ENCODE measurements at regions of chr21 and their contacts with region 1.

Region 1: GRCh38 chr21:34888569-34889319 is 160.4 kb downstream of the RUNX1 start:
- DNase-seq: peak; percentile 95
- H3K4me3 Mint-ChIP-seq: peak overlapping the region; percentile 96
- H3K27ac Mint-ChIP-seq: peak overlapping the region; percentile 99
- H3K4me1 Mint-ChIP-seq: peaks cover 34% of the 10 kb centered on the region
- H3K27me3 Mint-ChIP-seq: peaks cover 2% of the 10 kb centered on the region

Region 2: GRCh38 chr21:34693192-34693810 is 195.4 kb before region 1 on chr21:
- intact Hi-C with region 1: loop called (anchors 5 kb)
- DNase-seq: peak; percentile 83
- H3K4me3 Mint-ChIP-seq: no peak overlapping the region
- H3K27ac Mint-ChIP-seq: no peak overlapping the region
- H3K4me1 Mint-ChIP-seq: peaks cover 2% of the 10 kb centered on the region
- H3K27me3 Mint-ChIP-seq: peaks cover 38% of the 10 kb centered on the region

Region 3: GRCh38 chr21:34865928-34866284 is 22.8 kb before region 1 on chr21:
- intact Hi-C with region 1: loop called (anchors 2 kb)
- DNase-seq: peak; percentile 77
- H3K4me3 Mint-ChIP-seq: peak overlapping the region; percentile 68
- H3K27ac Mint-ChIP-seq: peak overlapping the region; percentile 82
- H3K4me1 Mint-ChIP-seq: peaks cover 38% of the 10 kb centered on the region
- H3K27me3 Mint-ChIP-seq: no peaks in the 10 kb centered on the region

Region 4: GRCh38 chr21:34967509-34968289 is 79.0 kb after region 1 on chr21:
- intact Hi-C with region 1: loop called (anchors 1 kb)
- DNase-seq: peak; percentile 77
- H3K4me3 Mint-ChIP-seq: peak overlapping the region; percentile 79
- H3K27ac Mint-ChIP-seq: peak overlapping the region; percentile 96
- H3K4me1 Mint-ChIP-seq: peaks cover 81% of the 10 kb centered on the region
- H3K27me3 Mint-ChIP-seq: peaks cover 9% of the 10 kb centered on the region

Region 5: DNA sequence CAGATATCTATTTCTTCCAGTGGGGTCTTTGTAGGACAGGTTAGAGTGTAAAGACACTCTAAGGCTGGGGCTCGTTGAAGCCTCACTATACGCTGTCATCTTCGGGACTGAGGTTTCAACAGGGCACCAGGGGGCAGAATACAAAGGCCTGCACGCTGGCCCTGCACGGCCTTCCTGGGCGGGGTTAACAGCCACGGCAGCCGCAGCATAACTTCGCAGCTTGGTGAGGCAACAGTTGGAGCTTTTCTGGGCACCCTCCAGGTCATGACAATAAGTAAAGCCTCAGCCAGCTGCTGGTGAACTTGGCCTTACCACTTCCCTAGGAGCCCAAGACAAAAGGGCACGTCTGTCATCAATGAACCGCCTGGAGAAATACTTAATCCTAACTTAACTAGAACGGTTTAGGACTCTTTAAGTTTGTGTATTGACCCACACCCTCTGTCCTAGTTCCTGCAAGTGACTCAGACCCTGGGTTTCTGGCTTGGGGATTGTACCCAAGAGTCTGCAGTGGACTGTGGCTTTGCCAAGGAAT is 162.6 kb after region 1 on chr21:
- intact Hi-C with region 1: loop called (anchors 1 kb)
- DNase-seq: peak; percentile 94
- H3K4me3 Mint-ChIP-seq: peak overlapping the region; percentile 89
- H3K27ac Mint-ChIP-seq: peak overlapping the region; percentile 94
- H3K4me1 Mint-ChIP-seq: peaks cover 57% of the 10 kb centered on the region
- H3K27me3 Mint-ChIP-seq: peaks cover 4% of the 10 kb centered on the region

Region 6: DNA sequence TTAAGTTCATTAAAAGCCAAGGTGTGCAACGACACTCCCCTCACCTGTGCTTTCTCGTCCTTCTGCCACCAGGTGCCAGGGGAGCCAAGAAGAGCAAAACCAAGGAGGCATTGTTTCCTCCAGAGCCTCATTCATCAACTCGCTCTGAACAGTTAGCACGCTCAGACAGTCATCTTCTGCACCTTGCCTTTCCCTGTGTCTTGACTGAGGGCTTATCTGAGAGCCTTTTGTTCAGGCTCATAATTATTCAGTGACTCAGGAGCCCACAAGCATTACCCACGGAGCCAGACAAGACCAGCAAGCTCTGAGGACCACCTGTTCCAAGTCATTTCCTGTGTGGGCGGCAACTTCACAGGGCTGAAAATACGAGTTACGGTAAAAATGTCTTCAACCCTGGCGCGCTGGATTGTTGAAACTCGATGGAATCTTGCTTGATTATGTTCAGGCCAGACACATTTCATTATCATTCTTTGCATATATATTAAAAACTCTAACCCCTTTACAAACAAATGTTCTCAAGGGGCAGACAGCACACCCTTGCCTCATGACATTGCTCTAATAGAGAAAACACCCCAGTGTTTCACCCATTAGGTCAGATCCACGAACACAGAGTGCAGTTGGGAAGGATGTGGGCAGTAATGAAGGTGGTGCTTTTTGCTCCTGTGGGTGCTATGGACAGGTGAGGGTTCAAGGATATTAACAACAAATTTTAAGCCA is 250.1 kb after region 1 on chr21:
- intact Hi-C with region 1: loop called (anchors 1 kb)
- DNase-seq: peak; percentile 68
- H3K4me3 Mint-ChIP-seq: peak overlapping the region; percentile 74
- H3K27ac Mint-ChIP-seq: peak overlapping the region; percentile 97
- H3K4me1 Mint-ChIP-seq: peaks cover 30% of the 10 kb centered on the region
- H3K27me3 Mint-ChIP-seq: no peaks in the 10 kb centered on the region

Region 7: DNA sequence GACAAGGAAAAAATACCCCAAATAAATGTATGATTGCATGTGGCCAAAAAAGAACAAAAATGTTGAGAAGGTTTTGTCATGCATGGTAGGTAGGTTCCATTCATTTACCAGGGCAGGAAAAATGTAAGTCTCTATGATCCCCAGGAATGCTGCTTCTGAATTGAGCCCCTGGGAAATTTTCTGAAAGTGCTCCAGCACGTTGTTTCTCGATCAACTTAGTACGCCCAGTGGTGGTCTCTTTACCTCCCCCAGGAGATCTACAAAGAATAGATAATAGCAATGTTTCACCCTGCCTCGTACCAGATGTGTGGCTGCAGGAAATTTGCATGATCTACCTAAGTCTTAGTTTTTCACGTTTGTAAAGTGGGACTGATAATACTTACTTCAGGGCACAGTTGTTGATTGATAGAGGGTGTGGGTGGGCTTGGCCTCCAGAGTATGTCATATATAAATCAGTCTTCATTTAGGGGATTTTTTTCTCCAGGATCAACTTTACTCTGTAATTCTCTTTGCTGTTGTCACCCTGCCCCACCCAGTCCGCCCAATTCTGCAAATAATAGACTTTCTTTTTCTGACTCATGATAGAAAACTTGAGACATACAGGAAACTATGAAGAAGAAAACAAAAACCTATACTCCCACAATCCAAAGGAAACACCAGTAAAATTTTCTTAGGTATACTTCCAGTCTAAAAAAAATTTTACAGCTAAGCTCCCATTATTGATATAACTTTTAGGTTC is 622.4 kb after region 1 on chr21:
- intact Hi-C with region 1: loop called (anchors 1 kb)
- DNase-seq: no peak
- H3K4me3 Mint-ChIP-seq: peak overlapping the region; percentile 30
- H3K27ac Mint-ChIP-seq: peak overlapping the region; percentile 42
- H3K4me1 Mint-ChIP-seq: peaks cover 36% of the 10 kb centered on the region
- H3K27me3 Mint-ChIP-seq: no peaks in the 10 kb centered on the region